ENCODE measurements at regions of chr9 and their contacts with region 1.

Region 1: DNA sequence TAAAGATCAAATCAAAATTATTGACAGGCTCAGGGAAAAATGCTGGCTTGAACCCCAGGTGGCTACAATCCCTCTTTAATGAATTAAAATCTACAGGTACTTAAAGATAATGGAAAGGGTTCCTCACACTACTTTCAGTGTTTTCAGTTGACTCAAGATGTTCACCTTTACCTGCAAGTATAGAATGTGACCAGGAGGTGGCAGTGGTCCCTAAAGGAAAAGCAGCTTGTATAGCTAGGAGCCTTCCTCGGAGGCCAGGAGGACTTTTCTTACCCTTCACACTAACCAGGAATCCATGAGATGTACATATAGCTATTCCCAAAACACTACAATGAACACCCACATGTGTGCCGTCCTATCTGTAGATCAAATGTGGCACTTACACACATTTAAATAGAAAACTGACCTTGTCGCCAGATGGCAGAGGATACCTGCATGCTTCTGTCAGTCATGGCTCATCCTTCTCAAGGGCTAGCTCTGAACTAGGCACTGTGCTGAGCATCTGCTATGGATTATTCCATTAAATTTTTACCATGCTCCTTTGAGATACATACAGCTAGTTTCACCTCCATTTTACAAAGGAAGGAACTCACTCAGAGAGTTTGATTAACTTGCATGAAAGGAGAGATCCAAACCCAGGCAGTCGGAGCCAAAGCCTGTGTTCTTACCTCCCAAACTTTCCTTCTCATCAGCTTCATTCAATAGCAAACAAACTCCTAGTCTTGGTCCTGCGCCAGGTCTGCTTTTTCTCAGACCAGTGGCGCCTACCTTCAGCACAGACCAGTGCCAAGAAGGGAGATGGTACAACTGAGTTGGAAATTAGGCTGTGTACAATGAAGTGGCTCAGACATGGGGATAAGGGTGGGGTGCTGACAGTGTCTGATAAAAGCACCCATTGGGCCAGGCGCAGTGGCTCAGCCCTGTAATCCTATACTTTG is 24.5 kb downstream of the C9orf152 start:
- DNase-seq: peak; percentile 59
- H3K4me3 ChIP-seq: no peak overlapping the region
- H3K27ac ChIP-seq: no peak overlapping the region
- H3K4me1 ChIP-seq: peaks cover 34% of the 10 kb centered on the region
- H3K27me3 ChIP-seq: no peaks in the 10 kb centered on the region
- CTCF ChIP-seq: peak; percentile 81 to 83

Region 2: DNA sequence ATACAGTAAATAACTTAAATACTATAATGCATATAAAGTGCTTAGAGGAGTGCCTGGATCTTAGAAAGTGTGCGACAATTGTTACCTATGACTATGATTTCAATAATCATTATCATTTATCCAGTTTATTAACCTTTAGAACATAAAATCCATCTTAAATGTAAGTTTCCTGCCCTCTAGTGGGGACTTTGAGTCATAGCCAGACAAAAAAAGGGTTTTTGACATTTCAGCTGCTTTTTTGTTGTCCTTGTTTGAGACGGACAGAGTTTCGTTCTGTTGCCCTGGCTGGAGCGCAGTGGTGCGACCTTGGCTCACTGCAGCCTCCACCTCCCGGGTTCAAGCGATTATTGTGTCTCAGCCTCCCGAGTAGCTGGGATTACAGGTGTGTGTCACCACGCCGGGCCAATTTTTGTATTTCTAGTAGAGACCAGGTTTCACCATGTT is 34.2 kb after region 1 on chr9:
- CTCF ChIA-PET with region 1: interaction called, 11 read pairs
- dilution Hi-C with region 1: no loop called
- in situ Hi-C with region 1: no loop called
- intact Hi-C with region 1: loop called (anchors 1 kb)
- DNase-seq: peak; percentile 22
- H3K4me3 ChIP-seq: no peak overlapping the region
- H3K27ac ChIP-seq: no peak overlapping the region
- H3K4me1 ChIP-seq: no peaks in the 10 kb centered on the region
- H3K27me3 ChIP-seq: no peaks in the 10 kb centered on the region
- CTCF ChIP-seq: peak; percentile 73

Region 3: DNA sequence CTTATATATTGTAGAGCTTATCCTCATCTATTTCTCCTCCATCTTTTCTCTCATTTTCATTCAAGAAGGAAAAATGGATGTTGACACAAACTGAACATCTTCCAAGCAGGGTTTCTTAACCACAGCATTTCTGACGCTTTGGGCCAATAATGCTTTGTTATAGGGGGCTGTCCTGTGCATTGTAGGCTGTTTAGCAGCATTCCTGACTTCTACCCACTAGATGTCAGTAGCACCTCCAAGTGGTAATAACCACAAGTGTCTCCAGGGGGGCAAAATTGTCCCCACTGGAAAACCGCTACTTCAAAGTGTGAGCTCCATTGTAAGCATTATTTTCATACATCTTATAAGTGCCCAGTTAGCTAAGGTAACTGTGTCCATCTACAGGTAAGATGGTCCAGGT is 156.8 kb after region 1 on chr9:
- CTCF ChIA-PET with region 1: no interaction called
- dilution Hi-C with region 1: no loop called
- in situ Hi-C with region 1: no loop called
- intact Hi-C with region 1: loop called (anchors 5 kb)
- DNase-seq: no peak
- H3K4me3 ChIP-seq: no peak overlapping the region
- H3K27ac ChIP-seq: no peak overlapping the region
- H3K4me1 ChIP-seq: no peaks in the 10 kb centered on the region
- H3K27me3 ChIP-seq: no peaks in the 10 kb centered on the region
- CTCF ChIP-seq: peak; percentile 15 to 58

Region 4: GRCh38 chr9:110357505-110357904 is 174.0 kb after region 1 on chr9:
- CTCF ChIA-PET with region 1: no interaction called
- dilution Hi-C with region 1: no loop called
- in situ Hi-C with region 1: no loop called
- intact Hi-C with region 1: no loop called
- DNase-seq: peak; percentile 37
- H3K4me3 ChIP-seq: no peak overlapping the region
- H3K27ac ChIP-seq: no peak overlapping the region
- H3K4me1 ChIP-seq: no peaks in the 10 kb centered on the region
- H3K27me3 ChIP-seq: no peaks in the 10 kb centered on the region
- CTCF ChIP-seq: no peak

Region 5: GRCh38 chr9:110427497-110428104 is 244.1 kb after region 1 on chr9:
- CTCF ChIA-PET with region 1: no interaction called
- dilution Hi-C with region 1: no loop called
- in situ Hi-C with region 1: loop called in 1 of 2 experiments (anchors 10 kb)
- intact Hi-C with region 1: loop called (anchors 5 kb)
- DNase-seq: peak; percentile 12
- H3K4me3 ChIP-seq: no peak overlapping the region
- H3K27ac ChIP-seq: no peak overlapping the region
- H3K4me1 ChIP-seq: no peaks in the 10 kb centered on the region
- H3K27me3 ChIP-seq: no peaks in the 10 kb centered on the region
- CTCF ChIP-seq: peak; percentile 68 to 73

Region 6: GRCh38 chr9:110744753-110745384 is 561.4 kb after region 1 on chr9:
- CTCF ChIA-PET with region 1: no interaction called
- dilution Hi-C with region 1: no loop called
- in situ Hi-C with region 1: no loop called
- intact Hi-C with region 1: no loop called
- DNase-seq: peak; percentile 92
- H3K4me3 ChIP-seq: no peak overlapping the region
- H3K27ac ChIP-seq: peak overlapping the region; percentile 59
- H3K4me1 ChIP-seq: peaks cover 49% of the 10 kb centered on the region
- H3K27me3 ChIP-seq: no peaks in the 10 kb centered on the region
- CTCF ChIP-seq: no peak

Measured in mammary epithelial cell (primary cell).